ENCODE measurements at regions of chr17 and their contacts with region 1.

Region 1: GRCh38 chr17:28896884-28897768 is at the start of gene FLOT2:
- DNase-seq: peak; percentile 50 to 83 (median 68)
- ATAC-seq: peak; percentile 79
- H3K4me3 ChIP-seq: peak within 1 kb of the TSS; percentile 83
- H3K4me3 Mint-ChIP-seq: peak within 1 kb of the TSS; percentile 93
- H3K27ac ChIP-seq: peak within 1 kb of the TSS; percentile 86 to 87
- H3K27ac Mint-ChIP-seq: peak within 1 kb of the TSS; percentile 95
- H3K4me1 ChIP-seq: peaks cover 75% of the 10 kb centered on the region
- H3K4me1 Mint-ChIP-seq: peaks cover 66% of the 10 kb centered on the region
- H3K27me3 ChIP-seq: no peaks in the 10 kb centered on the region
- H3K27me3 Mint-ChIP-seq: no peaks in the 10 kb centered on the region
- CTCF ChIP-seq: peak; percentile 60
- total RNA-seq, gene FLOT2: 79.7 to 85.1 TPM

Region 2: DNA sequence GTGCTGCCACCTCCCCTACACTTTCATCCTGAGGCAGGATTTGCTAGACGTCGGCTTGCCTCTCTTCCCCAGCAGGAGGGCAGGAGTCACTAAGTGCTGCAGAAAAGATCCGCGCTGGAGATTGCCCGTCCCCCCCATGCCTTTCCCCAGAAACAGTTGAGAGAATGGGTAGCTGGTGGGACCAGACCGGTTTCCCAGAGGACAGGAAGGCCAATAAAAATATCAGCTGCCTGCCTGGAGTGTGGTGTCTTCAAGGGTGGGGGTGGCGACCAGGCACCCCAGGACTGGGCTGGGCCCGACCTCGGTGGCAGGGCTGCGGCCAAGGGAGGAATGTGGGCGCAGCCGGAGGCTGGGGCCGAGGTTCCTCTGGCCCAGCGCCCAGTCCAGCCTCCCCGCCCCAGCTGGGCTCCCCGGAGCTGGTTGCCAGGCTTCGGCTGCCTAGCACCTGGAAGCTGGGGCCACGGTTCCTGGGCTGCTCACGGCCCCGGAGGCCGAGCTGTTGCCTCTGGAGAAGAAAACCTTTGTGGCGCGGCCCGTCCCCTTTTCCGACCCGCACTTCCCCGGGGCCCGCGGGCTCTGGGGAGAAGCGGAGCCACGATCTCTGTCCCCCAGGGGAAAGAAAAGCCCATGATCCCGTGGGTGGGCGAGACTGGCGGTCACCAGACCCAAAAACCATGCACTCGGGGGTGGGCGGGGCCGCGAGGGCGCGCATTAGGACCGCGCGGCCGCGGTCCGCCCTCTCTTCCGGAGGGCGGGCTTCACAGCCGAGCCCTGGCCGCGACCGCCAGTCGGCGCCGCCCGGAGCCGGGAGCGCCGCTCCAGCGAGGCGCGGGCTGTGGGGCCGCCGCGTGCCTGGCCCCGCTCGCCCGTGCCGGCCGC is 153.7 kb before region 1 on chr17 and contains the start of gene TRAF4:
- CTCF ChIA-PET with region 1: interaction called, 3 read pairs
- POLR2A ChIA-PET with region 1: interaction called, 11 read pairs
- intact Hi-C with region 1: no loop called
- DNase-seq: peak in 13 of 14 experiments; percentile 53 to 92 (median 67)
- ATAC-seq: peak; percentile 88
- H3K4me3 ChIP-seq: peak within 1 kb of the TSS; percentile 76
- H3K4me3 Mint-ChIP-seq: peak within 1 kb of the TSS; percentile 90
- H3K27ac ChIP-seq: peak within 1 kb of the TSS; percentile 72 to 88
- H3K27ac Mint-ChIP-seq: peak within 1 kb of the TSS; percentile 88
- H3K4me1 ChIP-seq: peaks cover 59% of the 10 kb centered on the region
- H3K4me1 Mint-ChIP-seq: peaks cover 27% of the 10 kb centered on the region
- H3K27me3 ChIP-seq: no peaks in the 10 kb centered on the region
- H3K27me3 Mint-ChIP-seq: no peaks in the 10 kb centered on the region
- CTCF ChIP-seq: no peak
- total RNA-seq, gene TRAF4: 411 to 416 TPM

Region 3: DNA sequence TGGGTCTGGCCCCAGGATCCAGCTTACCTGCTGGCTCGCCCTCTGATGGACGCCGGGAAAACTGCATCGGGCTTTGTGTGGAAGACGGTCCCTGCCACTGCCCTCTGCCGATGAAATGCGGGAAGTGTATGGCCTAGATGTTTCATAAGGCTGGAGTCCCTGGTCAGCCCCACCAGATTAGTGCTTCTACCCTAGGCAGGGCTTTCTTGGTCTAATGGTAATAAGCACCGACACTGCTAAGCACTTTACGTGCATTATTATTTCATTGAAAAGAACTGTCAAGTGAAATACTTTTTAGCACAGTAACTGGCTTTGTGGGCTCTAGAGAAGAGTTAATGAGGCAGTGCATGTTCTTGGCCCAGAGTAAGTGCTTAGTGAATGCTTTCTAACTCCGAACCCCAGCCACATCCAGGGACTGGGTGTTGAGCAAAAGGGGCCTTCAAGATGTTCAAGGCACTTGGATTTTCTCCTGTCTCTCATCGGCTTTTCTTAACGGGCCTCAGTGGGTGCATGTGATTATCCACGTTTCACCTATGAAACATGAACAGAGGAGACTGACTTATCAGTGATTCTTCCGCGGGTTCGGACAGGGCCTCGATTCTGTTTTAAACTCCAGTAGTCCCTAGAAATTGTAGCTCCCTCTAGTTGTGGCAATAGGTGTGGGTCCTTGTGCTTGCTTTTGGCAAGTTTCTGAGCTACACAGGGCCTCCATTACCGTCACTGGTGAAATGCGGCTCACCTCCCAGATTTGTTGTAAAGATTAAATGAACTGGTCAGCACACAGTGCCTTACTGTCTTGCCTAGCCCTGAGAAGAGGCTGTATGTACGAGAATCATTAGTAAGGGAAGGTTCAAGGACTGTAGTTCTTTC is 146.7 kb before region 1 on chr17:
- CTCF ChIA-PET with region 1: interaction called, 11 read pairs
- POLR2A ChIA-PET with region 1: interaction called, 11 read pairs
- intact Hi-C with region 1: no loop called
- DNase-seq: peak; percentile 82 to 94 (median 86)
- ATAC-seq: peak; percentile 90
- H3K4me3 ChIP-seq: no peak overlapping the region
- H3K4me3 Mint-ChIP-seq: peak overlapping the region; percentile 42
- H3K27ac ChIP-seq: no peak overlapping the region
- H3K27ac Mint-ChIP-seq: peak overlapping the region; percentile 70
- H3K4me1 ChIP-seq: peaks cover 27% of the 10 kb centered on the region
- H3K4me1 Mint-ChIP-seq: peaks cover 21% of the 10 kb centered on the region
- H3K27me3 ChIP-seq: no peaks in the 10 kb centered on the region
- H3K27me3 Mint-ChIP-seq: no peaks in the 10 kb centered on the region
- CTCF ChIP-seq: peak; percentile 100

Region 4: GRCh38 chr17:28842282-28843012 is 54.7 kb before region 1 on chr17 and contains the start of gene FAM222B:
- CTCF ChIA-PET with region 1: interaction called, 5 read pairs
- POLR2A ChIA-PET with region 1: interaction called, 15 read pairs
- intact Hi-C with region 1: no loop called
- DNase-seq: peak; percentile 70 to 94 (median 83)
- ATAC-seq: peak; percentile 97
- H3K4me3 ChIP-seq: peak within 1 kb of the TSS; percentile 99
- H3K4me3 Mint-ChIP-seq: peak within 1 kb of the TSS; percentile 100
- H3K27ac ChIP-seq: peak within 1 kb of the TSS; percentile 78 to 80
- H3K27ac Mint-ChIP-seq: peak within 1 kb of the TSS; percentile 91
- H3K4me1 ChIP-seq: peaks cover 20% of the 10 kb centered on the region
- H3K4me1 Mint-ChIP-seq: peaks cover 27% of the 10 kb centered on the region
- H3K27me3 ChIP-seq: no peaks in the 10 kb centered on the region
- H3K27me3 Mint-ChIP-seq: no peaks in the 10 kb centered on the region
- CTCF ChIP-seq: no peak
- total RNA-seq, gene FAM222B: 17.3 to 17.5 TPM

Region 5: GRCh38 chr17:28854457-28855350 is 42.4 kb before region 1 on chr17 and contains the start of gene ERAL1:
- CTCF ChIA-PET with region 1: interaction called, 7 read pairs
- POLR2A ChIA-PET with region 1: interaction called, 6 read pairs
- intact Hi-C with region 1: loop called (anchors 2 kb)
- DNase-seq: peak; percentile 69 to 90 (median 76)
- ATAC-seq: peak; percentile 100
- H3K4me3 ChIP-seq: peak within 1 kb of the TSS; percentile 96
- H3K4me3 Mint-ChIP-seq: peak within 1 kb of the TSS; percentile 91
- H3K27ac ChIP-seq: peak within 1 kb of the TSS; percentile 70 to 72
- H3K27ac Mint-ChIP-seq: peak within 1 kb of the TSS; percentile 78
- H3K4me1 ChIP-seq: peaks cover 15% of the 10 kb centered on the region
- H3K4me1 Mint-ChIP-seq: peaks cover 18% of the 10 kb centered on the region
- H3K27me3 ChIP-seq: no peaks in the 10 kb centered on the region
- H3K27me3 Mint-ChIP-seq: no peaks in the 10 kb centered on the region
- CTCF ChIP-seq: no peak
- total RNA-seq, gene ERAL1: 15.6 to 16.8 TPM

Region 6: DNA sequence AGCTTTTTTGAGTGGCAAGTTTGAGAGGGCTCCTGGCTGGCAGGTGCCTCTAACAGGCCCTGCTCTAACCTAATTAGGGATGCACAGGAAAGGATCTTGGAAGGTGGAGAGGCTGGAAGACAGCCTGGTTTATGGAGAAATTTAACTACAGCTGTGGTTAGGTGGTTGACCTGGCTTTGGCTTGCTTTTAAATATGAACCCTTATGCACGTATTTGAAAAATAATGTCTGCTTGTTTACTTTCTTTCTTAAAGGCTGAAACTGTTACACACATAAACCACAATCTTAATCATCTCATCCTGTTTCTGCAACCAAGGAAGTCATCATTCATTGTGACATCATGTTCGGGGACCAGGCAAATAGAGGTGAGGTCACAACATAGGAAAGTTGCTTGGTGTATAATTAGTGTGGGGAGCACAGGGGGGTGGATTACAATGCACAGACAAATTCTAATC is 28.8 kb after region 1 on chr17:
- CTCF ChIA-PET with region 1: interaction called, 20 read pairs
- POLR2A ChIA-PET with region 1: interaction called, 11 read pairs
- intact Hi-C with region 1: no loop called
- DNase-seq: peak in 12 of 14 experiments; percentile 20 to 95 (median 41)
- ATAC-seq: peak; percentile 91
- H3K4me3 ChIP-seq: peak overlapping the region; percentile 22
- H3K4me3 Mint-ChIP-seq: peak overlapping the region; percentile 43
- H3K27ac ChIP-seq: peak overlapping the region; percentile 91 to 92
- H3K27ac Mint-ChIP-seq: peak overlapping the region; percentile 98
- H3K4me1 ChIP-seq: peaks cover 52% of the 10 kb centered on the region
- H3K4me1 Mint-ChIP-seq: peaks cover 66% of the 10 kb centered on the region
- H3K27me3 ChIP-seq: no peaks in the 10 kb centered on the region
- H3K27me3 Mint-ChIP-seq: no peaks in the 10 kb centered on the region
- CTCF ChIP-seq: no peak